ENCODE measurements at regions of chr9 and their contacts with region 1.

Region 1: GRCh38 chr9:127785023-127785932 is 556 bp upstream of the CDK9 start:
- DNase-seq: peak; percentile 91 to 94
- ATAC-seq: peak; percentile 72 to 86 (median 80)
- H3K4me3 ChIP-seq: peak overlapping the region; percentile 96
- H3K27ac ChIP-seq: peak overlapping the region; percentile 93
- H3K4me1 ChIP-seq: peaks cover 22% of the 10 kb centered on the region
- H3K27me3 ChIP-seq: no peaks in the 10 kb centered on the region
- CTCF ChIP-seq: peak; percentile 84

Region 2: GRCh38 chr9:127734747-127735529 is 50.3 kb before region 1 on chr9 and contains the start of gene TOR2A:
- intact Hi-C with region 1: loop called (anchors 2 kb)
- DNase-seq: peak; percentile 99
- ATAC-seq: peak; percentile 95 to 96 (median 95)
- H3K4me3 ChIP-seq: peak within 1 kb of the TSS; percentile 97
- H3K27ac ChIP-seq: peak within 1 kb of the TSS; percentile 99
- H3K4me1 ChIP-seq: peaks cover 13% of the 10 kb centered on the region
- H3K27me3 ChIP-seq: peaks cover 0 to 1% (median 0%) of the 10 kb centered on the region in 3 donors
- CTCF ChIP-seq: peak; percentile 97
- total RNA-seq, gene TOR2A: 2.8 to 6.7 (median 4.0) TPM

Region 3: GRCh38 chr9:127802576-127803443 is 17.5 kb after region 1 on chr9 and contains the start of gene FPGS:
- intact Hi-C with region 1: loop called in 1 of 2 experiments (anchors 2 kb)
- DNase-seq: peak; percentile 93 to 95
- ATAC-seq: peak; percentile 84 to 88 (median 86)
- H3K4me3 ChIP-seq: peak within 1 kb of the TSS; percentile 80
- H3K27ac ChIP-seq: peak within 1 kb of the TSS; percentile 95
- H3K4me1 ChIP-seq: peaks cover 24% of the 10 kb centered on the region
- H3K27me3 ChIP-seq: no peaks in the 10 kb centered on the region
- CTCF ChIP-seq: no peak
- total RNA-seq, gene FPGS: 39.7 to 61.9 (median 45.8) TPM

Region 4: GRCh38 chr9:127869310-127870152 is 84.3 kb after region 1 on chr9:
- intact Hi-C with region 1: loop called in 1 of 2 experiments (anchors 5 kb)
- DNase-seq: peak; percentile 91 to 96
- ATAC-seq: peak; percentile 76 to 85 (median 79)
- H3K4me3 ChIP-seq: no peak overlapping the region
- H3K27ac ChIP-seq: no peak overlapping the region
- H3K4me1 ChIP-seq: peaks cover 30% of the 10 kb centered on the region
- H3K27me3 ChIP-seq: no peaks in the 10 kb centered on the region
- CTCF ChIP-seq: peak; percentile 78

Region 5: DNA sequence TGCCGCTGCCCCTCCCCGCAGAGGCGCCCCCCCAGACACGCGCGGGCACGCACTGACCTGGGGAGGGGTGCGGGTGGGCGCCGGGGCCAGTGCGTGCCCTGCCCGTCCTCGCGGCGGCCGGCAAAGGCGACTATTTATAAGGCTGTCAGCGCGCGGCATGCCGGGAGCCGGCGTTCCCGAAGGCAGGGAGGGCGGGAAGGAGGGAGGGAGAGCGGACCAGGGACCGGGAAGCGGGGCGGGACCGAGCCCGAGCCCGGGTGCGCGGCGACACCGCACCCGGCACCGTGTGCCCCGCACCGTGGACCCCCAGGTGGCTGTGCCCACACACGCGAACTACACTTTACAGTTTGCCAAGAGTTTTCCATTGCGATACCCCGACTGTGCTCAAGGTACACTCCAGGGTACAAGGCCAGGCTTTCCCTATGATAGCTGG is 92.3 kb after region 1 on chr9 and contains the start of gene AK1:
- intact Hi-C with region 1: loop called (anchors 5 kb)
- DNase-seq: peak; percentile 83 to 89
- ATAC-seq: peak; percentile 75 to 83 (median 78)
- H3K4me3 ChIP-seq: peak within 1 kb of the TSS; percentile 78
- H3K27ac ChIP-seq: peak within 1 kb of the TSS; percentile 85
- H3K4me1 ChIP-seq: peaks cover 41% of the 10 kb centered on the region
- H3K27me3 ChIP-seq: no peaks in the 10 kb centered on the region
- CTCF ChIP-seq: no peak
- total RNA-seq, gene AK1: 369 to 854 (median 688) TPM

Region 6: DNA sequence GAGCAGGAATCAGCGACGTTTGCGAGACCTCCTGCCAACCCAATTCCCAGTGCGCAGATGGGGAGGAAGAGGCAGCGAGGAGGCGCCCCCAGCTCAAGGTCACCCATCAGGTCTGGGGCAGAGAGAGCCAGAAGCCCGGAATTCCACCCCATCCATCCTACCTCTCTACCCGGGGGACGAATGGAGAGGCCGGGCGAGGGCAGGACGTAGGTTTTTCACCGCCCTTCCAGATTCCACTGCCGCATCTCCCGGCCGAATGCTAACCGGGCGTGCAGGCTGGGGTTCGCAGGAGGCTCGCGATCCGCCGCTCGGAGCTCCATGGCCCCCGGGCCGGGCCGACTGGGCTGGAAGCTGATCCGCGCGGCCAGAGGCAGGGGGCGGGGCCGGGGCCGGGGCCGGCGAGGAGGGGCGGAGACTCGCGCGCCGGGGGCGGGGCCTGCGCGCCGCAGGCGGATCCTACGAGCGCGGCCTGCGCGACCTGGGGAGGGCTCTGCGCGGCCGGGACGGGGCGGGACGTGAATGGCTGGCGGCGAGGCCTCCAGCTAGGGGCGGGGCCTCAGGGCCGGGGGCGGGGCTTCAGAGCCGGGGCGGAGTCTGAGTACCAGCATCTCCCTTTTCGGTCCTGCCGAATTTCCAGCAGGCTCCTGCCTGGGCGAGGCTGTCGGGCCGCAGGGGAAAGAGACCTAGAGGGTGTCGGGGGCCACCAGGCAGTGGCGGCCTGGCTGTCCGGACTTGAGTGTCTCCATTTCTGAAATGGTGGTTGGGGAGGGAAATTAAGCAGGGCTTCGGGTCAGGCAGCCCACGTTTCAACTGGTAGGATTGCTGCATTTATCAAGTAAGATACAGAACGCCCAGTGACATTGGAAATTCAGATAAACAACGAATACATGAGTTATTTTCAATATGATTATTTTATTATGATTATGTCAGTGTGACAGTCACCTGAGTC is 131.7 kb after region 1 on chr9 and contains the start of gene ST6GALNAC4:
- intact Hi-C with region 1: loop called (anchors 5 to 10 kb)
- DNase-seq: peak; percentile 95 to 97
- ATAC-seq: peak; percentile 91 to 92 (median 92)
- H3K4me3 ChIP-seq: peak within 1 kb of the TSS; percentile 73
- H3K27ac ChIP-seq: peak within 1 kb of the TSS; percentile 81
- H3K4me1 ChIP-seq: peaks cover 37% of the 10 kb centered on the region
- H3K27me3 ChIP-seq: no peaks in the 10 kb centered on the region
- CTCF ChIP-seq: no peak
- total RNA-seq, gene ST6GALNAC4: 8.9 to 52.6 (median 27.3) TPM